ENCODE measurements at regions of chr20 and their contacts with region 1.

Region 1: GRCh38 chr20:36932476-36933426 is 18.8 kb downstream of the SAMHD1 start:
- DNase-seq: no peak
- H3K4me3 ChIP-seq: no peak overlapping the region
- H3K4me3 Mint-ChIP-seq: peak overlapping the region in 7 of 8 donors; percentile 8 to 63 (median 47)
- H3K27ac ChIP-seq: no peak overlapping the region
- H3K27ac Mint-ChIP-seq: peak overlapping the region; percentile 67 to 92 (median 89)
- H3K4me1 ChIP-seq: peaks cover 86% of the 10 kb centered on the region
- H3K4me1 Mint-ChIP-seq: peaks cover 27 to 79% (median 56%) of the 10 kb centered on the region in 4 donors
- H3K27me3 ChIP-seq: no peaks in the 10 kb centered on the region
- H3K27me3 Mint-ChIP-seq: no peaks in the 10 kb centered on the region

Region 2: GRCh38 chr20:36919715-36920333 is 12.9 kb before region 1 on chr20:
- CTCF ChIA-PET with region 1: interaction called, 7 read pairs
- POLR2A ChIA-PET with region 1: interaction called, 13 read pairs
- intact Hi-C with region 1: no loop called
- DNase-seq: peak; percentile 58 to 66 (median 61)
- H3K4me3 ChIP-seq: no peak overlapping the region
- H3K4me3 Mint-ChIP-seq: no peak overlapping the region
- H3K27ac ChIP-seq: no peak overlapping the region
- H3K27ac Mint-ChIP-seq: peak overlapping the region; percentile 13 to 84 (median 60)
- H3K4me1 ChIP-seq: peaks cover 21% of the 10 kb centered on the region
- H3K4me1 Mint-ChIP-seq: peaks cover 7 to 20% (median 11%) of the 10 kb centered on the region in 4 donors
- H3K27me3 ChIP-seq: no peaks in the 10 kb centered on the region
- H3K27me3 Mint-ChIP-seq: no peaks in the 10 kb centered on the region

Region 3: GRCh38 chr20:36951198-36951976 is 18.6 kb after region 1 on chr20 and contains the start of gene SAMHD1:
- CTCF ChIA-PET with region 1: interaction called, 4 read pairs
- POLR2A ChIA-PET with region 1: interaction called, 15 read pairs
- intact Hi-C with region 1: no loop called
- DNase-seq: peak; percentile 86 to 89 (median 86)
- H3K4me3 ChIP-seq: peak within 1 kb of the TSS; percentile 90 to 98
- H3K4me3 Mint-ChIP-seq: peak within 1 kb of the TSS; percentile 95 to 100 (median 98)
- H3K27ac ChIP-seq: peak within 1 kb of the TSS; percentile 87
- H3K27ac Mint-ChIP-seq: peak within 1 kb of the TSS; percentile 94 to 100 (median 98)
- H3K4me1 ChIP-seq: peaks cover 49% of the 10 kb centered on the region
- H3K4me1 Mint-ChIP-seq: peaks cover 24 to 55% (median 35%) of the 10 kb centered on the region in 4 donors
- H3K27me3 ChIP-seq: no peaks in the 10 kb centered on the region
- H3K27me3 Mint-ChIP-seq: no peaks in the 10 kb centered on the region
- total RNA-seq, gene SAMHD1: 216 to 223 TPM

Region 4: GRCh38 chr20:36969478-36970186 is 36.9 kb after region 1 on chr20:
- CTCF ChIA-PET with region 1: interaction called, 6 read pairs
- POLR2A ChIA-PET with region 1: interaction called, 24 read pairs
- intact Hi-C with region 1: no loop called
- DNase-seq: peak in 4 of 5 donors; percentile 39 to 48 (median 45)
- H3K4me3 ChIP-seq: peak overlapping the region in 1 of 2 donors; percentile 51
- H3K4me3 Mint-ChIP-seq: peak overlapping the region; percentile 4 to 91 (median 80)
- H3K27ac ChIP-seq: peak overlapping the region; percentile 36
- H3K27ac Mint-ChIP-seq: peak overlapping the region; percentile 77 to 98 (median 95)
- H3K4me1 ChIP-seq: peaks cover 77% of the 10 kb centered on the region
- H3K4me1 Mint-ChIP-seq: peaks cover 45 to 74% (median 64%) of the 10 kb centered on the region in 4 donors
- H3K27me3 ChIP-seq: no peaks in the 10 kb centered on the region
- H3K27me3 Mint-ChIP-seq: no peaks in the 10 kb centered on the region

Region 5: DNA sequence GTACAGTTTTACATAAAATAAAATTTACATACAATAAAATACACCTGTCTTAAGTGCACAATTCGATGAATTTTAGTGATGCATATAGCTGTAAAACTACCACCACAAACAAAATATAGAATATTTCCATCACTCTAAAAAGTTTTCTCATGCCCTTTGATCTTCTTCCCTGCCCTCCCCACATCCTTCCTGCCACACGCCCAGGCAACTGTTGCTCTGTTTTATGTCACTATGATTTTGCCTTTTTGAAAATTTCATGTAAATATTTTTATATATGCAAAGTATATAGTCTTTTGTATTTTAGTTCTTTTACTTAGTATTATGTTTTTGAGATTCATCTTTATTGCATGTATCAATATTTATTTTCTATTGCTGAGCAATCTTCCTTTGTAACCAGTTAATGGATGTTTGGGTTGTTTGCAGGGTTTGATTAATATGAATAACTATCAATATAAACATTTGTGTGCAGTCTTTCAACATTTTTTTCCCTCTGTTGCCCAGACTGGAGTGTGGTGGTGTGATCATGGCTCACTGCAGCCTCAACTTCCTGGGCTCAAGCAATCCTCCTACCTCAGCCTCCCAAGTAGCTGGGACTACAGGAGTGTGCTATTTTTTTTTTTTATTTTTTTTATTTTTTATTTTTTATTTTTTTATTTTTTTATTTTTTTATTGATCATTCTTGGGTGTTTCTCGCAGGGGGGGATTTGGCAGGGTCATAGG is 42.5 kb after region 1 on chr20:
- CTCF ChIA-PET with region 1: interaction called, 3 read pairs
- POLR2A ChIA-PET with region 1: interaction called, 24 read pairs
- intact Hi-C with region 1: loop called (anchors 1 kb)
- DNase-seq: peak; percentile 82 to 88 (median 84)
- H3K4me3 ChIP-seq: no peak overlapping the region
- H3K4me3 Mint-ChIP-seq: peak overlapping the region; percentile 48 to 79 (median 66)
- H3K27ac ChIP-seq: peak overlapping the region; percentile 21
- H3K27ac Mint-ChIP-seq: peak overlapping the region; percentile 77 to 96 (median 89)
- H3K4me1 ChIP-seq: peaks cover 55% of the 10 kb centered on the region
- H3K4me1 Mint-ChIP-seq: peaks cover 21 to 50% (median 37%) of the 10 kb centered on the region in 4 donors
- H3K27me3 ChIP-seq: no peaks in the 10 kb centered on the region
- H3K27me3 Mint-ChIP-seq: no peaks in the 10 kb centered on the region